Transverse colon (tissue), 4 donors: ENCODE measurements at regions of chr2 and their contacts with region 1.

Region 1: DNA sequence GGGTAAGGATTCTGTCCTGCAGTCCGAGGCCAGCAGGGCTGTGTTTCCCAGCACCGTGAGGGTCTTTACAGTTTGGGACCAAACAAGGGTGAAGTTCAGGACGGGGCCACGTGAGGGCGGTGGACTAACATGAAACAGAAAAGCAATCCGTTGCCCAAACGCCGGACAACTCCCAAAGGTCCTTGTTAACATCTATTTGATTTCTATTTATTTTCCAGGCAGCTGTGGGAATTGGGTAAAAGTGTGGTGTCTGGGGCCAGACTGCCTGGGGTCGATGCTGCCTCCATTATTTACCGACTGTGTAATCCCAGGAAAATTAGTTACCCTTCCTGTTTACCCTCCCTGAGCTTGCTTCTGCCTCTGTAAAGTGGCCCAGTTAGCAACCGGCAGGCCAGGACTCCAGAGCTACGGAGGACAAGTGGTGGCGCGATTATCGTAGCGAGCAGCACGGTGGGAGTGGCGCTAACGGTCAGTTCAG is 66.3 kb upstream of the TCF7L1 start:
- DNase-seq: peak; percentile 66
- H3K4me3 ChIP-seq: peak overlapping the region in 2 of 4 donors; percentile 10 to 24
- H3K27ac ChIP-seq: no peak overlapping the region
- H3K4me1 ChIP-seq: peaks cover 0 to 6% (median 2%) of the 10 kb centered on the region in 4 donors
- H3K27me3 ChIP-seq: peaks cover 3% of the 10 kb centered on the region
- CTCF ChIP-seq: peak; percentile 71 to 80 (median 74)
- EP300 ChIP-seq: no peak
- POLR2A ChIP-seq: no peak

Region 2: DNA sequence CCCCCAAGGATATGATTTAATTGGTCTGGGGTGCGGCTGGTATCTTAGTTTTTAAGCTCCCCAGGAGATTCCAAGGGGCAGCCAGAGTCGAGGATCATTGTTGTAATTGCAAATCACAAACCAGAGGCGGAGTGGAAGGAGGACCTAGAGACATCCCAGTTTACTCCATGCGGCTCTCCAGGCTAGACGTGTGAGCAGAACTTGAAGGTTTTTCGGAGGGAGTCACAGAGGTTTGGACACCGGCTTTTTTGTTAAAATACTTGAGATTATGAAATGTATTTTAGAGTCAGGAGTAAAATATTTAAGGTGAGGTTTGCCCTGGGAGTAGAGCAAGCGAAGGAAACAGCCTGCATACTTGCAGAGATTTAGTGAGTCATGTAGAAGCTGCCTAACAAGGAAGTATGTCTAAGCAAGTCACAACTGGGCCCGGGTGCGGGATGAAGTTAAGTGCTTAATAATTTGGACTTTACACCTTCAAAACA is 221.4 kb after region 1 on chr2:
- in situ Hi-C with region 1: loop called (anchors 5 to 10 kb)
- intact Hi-C with region 1: loop called (anchors 5 kb)
- DNase-seq: peak; percentile 69
- H3K4me3 ChIP-seq: no peak overlapping the region
- H3K27ac ChIP-seq: peak overlapping the region in 2 of 4 donors; percentile 15 to 37
- H3K4me1 ChIP-seq: peaks cover 0 to 23% (median 4%) of the 10 kb centered on the region in 4 donors
- H3K27me3 ChIP-seq: no peaks in the 10 kb centered on the region
- CTCF ChIP-seq: no peak
- EP300 ChIP-seq: no peak
- POLR2A ChIP-seq: no peak

Region 3: DNA sequence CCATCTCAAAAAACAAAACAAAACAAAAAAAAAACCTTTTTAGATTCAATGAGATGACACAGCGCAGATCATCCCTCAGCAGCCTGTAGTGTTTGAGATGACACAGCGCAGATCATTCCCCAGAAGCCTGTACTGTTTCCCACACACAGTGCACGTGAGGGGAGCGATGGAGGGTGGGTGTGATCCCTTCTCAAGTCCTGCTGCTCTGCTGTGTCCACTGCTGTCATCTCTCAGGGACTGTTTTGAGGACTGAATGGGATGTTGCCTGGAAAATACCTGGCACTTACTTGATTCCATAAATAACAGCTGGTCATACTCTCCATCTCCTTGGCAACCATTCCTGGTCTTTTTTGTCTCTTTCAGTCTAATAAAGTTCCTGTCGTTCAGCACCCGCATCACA is 235.2 kb after region 1 on chr2:
- in situ Hi-C with region 1: loop called in 3 of 4 experiments (anchors 10 kb)
- intact Hi-C with region 1: loop called (anchors 5 kb)
- DNase-seq: no peak
- H3K4me3 ChIP-seq: no peak overlapping the region
- H3K27ac ChIP-seq: no peak overlapping the region
- H3K4me1 ChIP-seq: peaks cover 0 to 21% (median 7%) of the 10 kb centered on the region in 4 donors
- H3K27me3 ChIP-seq: no peaks in the 10 kb centered on the region
- CTCF ChIP-seq: no peak
- EP300 ChIP-seq: no peak
- POLR2A ChIP-seq: no peak